ENCODE measurements at regions of chr11 and their contacts with region 1.

Region 1: DNA sequence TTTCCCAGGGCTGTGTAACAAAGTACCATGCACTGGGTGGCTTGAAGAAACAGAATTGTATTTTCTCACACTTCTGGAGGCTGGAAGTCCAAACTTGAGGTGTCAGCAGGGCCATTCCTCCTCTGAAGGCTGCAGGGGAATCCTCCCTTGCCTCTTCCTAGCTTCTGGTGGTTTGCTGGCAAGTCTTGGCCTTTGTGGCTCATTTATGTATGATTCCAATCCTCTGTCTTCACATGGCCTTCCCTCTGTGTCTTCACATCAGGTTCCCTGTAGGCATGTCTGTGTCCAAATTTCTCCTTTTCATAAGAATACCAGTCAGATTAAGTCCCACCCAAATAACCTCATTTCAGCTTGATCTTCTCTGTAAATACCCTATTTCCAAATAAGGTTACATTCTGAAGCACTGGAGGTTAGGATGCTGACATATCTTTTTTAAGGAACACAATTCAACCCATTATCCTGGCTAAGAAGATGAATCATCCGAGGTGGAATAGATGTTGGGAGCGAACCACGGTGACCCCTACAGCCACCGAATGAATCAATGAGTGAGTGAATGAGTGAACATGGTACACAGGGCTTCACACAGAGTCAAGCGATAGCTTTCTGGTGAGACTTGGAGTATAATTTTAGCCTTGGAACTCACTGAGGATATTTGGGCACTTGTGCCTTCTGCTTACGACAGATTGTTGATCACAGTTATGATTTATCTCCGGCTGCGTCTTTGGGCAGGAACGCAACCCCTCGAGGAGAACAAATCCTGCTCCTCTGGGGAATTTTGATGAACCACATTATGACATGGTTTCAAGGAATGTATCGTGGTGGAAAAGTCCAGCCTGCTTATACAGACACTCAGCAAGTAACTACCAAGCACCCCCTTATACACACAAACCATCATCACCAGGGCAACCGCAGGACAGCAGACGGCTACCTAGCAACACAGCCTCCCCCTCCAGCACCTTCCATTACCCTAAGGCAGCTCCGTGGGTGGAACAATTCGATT is 34.3 kb upstream of the MICAL2 start:
- DNase-seq: peak in 1 of 2 donors; percentile 93
- H3K4me3 ChIP-seq: no peak overlapping the region
- H3K27ac ChIP-seq: peak overlapping the region; percentile 83 to 91
- H3K4me1 ChIP-seq: peaks cover 16 to 42% of the 10 kb centered on the region in 2 donors
- H3K27me3 ChIP-seq: no peaks in the 10 kb centered on the region
- CTCF ChIP-seq: no peak

Region 2: DNA sequence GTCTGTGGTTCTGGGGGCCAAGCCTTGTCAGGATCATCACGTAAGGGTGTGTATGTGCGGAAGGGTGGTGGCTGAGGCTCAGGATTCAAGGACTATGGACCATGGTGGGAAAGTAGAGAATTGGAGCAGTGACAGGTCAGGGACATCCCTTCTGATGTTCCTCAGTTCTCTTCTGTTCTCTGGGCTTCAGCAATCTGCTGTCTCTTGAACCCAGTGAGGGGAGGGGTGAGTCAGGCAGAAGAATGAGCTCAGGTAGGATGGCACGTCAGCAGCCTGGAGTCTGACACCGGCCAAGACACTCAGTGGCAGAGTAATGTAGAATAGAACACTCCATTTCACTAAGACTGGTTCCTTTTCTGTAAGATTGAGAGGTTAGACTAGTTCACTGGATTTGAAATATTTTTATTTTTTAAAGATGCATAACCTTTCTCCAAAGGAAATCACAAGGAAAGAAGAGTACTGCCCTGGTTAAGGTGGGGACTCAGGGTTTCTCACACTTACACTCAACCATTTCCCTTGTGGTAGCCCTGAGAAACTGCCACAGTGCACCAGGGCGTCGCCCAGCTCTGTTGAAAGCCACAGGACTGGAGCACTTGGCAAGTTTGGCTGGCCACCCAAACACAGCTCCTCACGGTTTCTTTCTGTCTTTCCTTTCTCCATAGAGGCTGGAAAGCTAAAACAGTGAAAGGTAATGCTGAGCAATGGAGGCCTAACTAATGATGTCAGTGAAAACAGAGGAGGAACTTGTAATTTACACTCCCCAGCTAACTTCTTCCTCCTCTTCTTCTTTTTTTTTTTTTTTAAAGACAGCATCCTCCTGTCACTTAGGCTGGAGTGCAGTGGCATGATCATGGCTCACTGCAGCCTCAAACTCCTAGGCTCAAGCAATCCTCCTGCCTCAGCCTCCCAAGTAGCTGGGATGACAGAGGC is 11.2 kb after region 1 on chr11:
- intact Hi-C with region 1: loop called (anchors 1 kb)
- DNase-seq: peak in 1 of 2 donors; percentile 82
- H3K4me3 ChIP-seq: peak overlapping the region; percentile 46 to 69
- H3K27ac ChIP-seq: peak overlapping the region; percentile 98 to 99
- H3K4me1 ChIP-seq: peaks cover 24 to 59% of the 10 kb centered on the region in 2 donors
- H3K27me3 ChIP-seq: no peaks in the 10 kb centered on the region
- CTCF ChIP-seq: peak; percentile 20 to 35 (median 27)

Region 3: DNA sequence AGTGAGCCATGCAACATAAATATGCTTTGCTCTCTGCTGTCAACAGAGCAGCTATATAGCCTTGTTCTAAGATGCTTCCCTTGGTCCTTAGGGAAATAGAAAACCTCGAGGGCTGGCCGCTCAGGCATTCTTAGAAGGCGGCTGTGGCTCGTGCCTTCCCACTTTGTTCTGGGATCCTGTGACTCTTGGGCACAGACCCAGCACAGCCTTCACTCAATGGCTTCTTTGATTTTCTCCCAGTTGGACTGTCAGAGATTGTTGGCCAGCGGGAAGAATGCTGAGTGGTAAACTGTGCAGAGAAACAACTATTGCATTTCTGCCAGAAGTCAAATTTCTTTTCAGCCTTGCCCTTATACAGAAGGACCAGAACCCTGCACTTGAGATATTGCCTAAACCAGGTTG is 24.7 kb after region 1 on chr11:
- intact Hi-C with region 1: no loop called
- DNase-seq: no peak
- H3K4me3 ChIP-seq: no peak overlapping the region
- H3K27ac ChIP-seq: no peak overlapping the region
- H3K4me1 ChIP-seq: peaks cover 0 to 15% of the 10 kb centered on the region in 2 donors
- H3K27me3 ChIP-seq: no peaks in the 10 kb centered on the region
- CTCF ChIP-seq: no peak

Measured in ascending aorta (tissue), 2 donors.